Colonic mucosa (tissue), 4 donors: ENCODE measurements at regions of chr1 and their contacts with region 1.

Region 1: GRCh38 chr1:41795205-41795762 is 123.4 kb downstream of the HIVEP3 start:
- DNase-seq: no peak
- H3K4me3 ChIP-seq: no peak overlapping the region
- H3K27ac ChIP-seq: no peak overlapping the region
- H3K4me1 ChIP-seq: no peaks in the 10 kb centered on the region
- H3K27me3 ChIP-seq: no peaks in the 10 kb centered on the region
- CTCF ChIP-seq: no peak

Region 2: GRCh38 chr1:41573785-41574713 is 221.2 kb before region 1 on chr1:
- intact Hi-C with region 1: loop called (anchors 10 kb)
- DNase-seq: peak; percentile 81
- H3K4me3 ChIP-seq: no peak overlapping the region
- H3K27ac ChIP-seq: no peak overlapping the region
- H3K4me1 ChIP-seq: no peaks in the 10 kb centered on the region
- H3K27me3 ChIP-seq: no peaks in the 10 kb centered on the region
- CTCF ChIP-seq: peak; percentile 68

Region 3: GRCh38 chr1:41868599-41868998 is 73.3 kb after region 1 on chr1:
- intact Hi-C with region 1: no loop called
- DNase-seq: no peak
- H3K4me3 ChIP-seq: no peak overlapping the region
- H3K27ac ChIP-seq: no peak overlapping the region
- H3K4me1 ChIP-seq: no peaks in the 10 kb centered on the region
- H3K27me3 ChIP-seq: no peaks in the 10 kb centered on the region
- CTCF ChIP-seq: no peak